ENCODE measurements at regions of chr16 and their contacts with region 1.

Region 1: DNA sequence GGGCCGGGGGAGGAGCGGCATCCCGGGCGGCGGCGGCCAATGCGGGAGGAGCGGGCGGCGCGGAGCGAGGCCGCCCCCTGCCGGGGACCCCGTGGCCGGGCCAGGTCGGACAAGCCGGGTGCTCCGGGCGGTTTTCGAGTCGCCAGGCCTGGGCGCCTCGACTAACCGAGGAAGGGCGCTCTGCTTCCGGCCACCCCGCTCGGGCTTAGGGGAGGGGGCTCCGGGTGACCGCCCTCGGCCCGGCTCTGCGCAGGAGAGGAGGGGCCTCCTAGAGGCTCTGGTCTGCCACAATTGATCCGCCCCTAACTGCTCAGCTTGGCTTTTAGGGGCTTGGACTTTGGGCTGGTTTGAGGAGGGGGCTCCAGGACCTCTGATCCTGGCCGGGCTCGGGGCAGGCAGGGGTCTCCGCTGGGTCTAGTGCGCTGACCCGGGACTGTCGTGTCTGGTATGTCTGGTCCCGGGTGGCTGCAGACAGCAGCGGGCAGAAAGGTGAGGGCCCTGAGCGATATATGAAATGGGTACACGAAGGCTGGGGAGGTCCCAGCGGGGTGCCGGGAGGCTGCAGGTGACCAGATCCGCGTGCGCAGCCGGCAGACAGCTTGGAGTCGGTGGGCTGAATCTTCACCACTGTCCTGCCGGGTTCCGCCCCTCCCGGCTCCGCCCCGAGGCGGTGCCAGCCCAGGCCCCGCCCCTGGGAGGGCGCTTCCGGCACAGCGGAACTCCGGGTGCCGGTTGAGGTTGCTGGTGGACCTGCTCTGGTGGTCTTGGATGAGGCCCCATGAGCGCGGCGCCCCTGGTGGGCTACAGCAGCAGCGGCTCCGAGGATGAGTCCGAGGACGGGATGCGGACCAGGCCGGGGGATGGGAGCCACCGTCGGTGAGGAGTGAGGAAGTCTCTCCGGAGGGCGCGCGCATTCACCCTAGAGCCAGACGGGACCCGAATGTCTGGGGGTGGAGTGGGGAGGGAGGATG is at the start of gene USB1:
- DNase-seq: peak; percentile 95
- total RNA-seq, gene USB1: 36.0 TPM

Region 2: DNA sequence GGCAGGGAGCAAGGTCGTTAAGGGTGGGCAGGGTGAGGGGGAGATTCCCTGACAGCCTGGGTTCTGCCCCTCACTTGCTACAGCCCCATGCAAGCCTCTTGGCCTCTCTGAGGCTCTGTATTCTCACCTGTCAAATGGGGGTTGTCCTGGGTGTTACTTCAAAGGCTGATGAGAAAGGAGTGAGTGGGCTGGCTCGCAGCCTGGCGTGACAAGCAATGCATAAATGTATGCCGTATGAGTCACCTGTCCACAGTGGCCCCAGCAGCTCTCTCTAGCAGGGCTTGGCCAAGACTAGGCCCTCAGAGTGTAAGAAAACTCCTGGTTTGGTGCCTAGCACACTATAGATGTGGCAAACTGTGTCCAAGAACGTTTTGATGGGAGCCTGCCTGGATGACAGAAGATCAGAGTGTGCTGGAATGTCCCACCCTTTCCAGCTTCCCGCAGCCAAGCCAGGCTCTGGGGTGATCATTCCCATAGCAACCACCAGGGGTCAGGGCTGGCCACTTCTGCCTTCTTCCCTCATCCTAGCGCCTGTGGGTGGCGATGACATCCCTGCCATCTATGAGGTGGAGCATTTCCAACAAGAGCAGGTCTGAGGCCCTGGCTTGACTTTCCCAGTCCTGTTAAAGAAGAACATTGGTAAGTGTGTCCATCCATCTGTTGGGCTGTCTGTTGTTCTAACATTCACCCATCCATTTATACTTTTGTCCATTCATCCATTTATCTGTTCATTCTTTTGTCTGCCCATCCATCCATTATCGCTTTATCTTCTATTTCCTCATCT is 409.7 kb before region 1 on chr16:
- intact Hi-C with region 1: loop called (anchors 5 kb)
- DNase-seq: peak; percentile 88

Region 3: GRCh38 chr16:57757326-57757786 is 243.6 kb before region 1 on chr16:
- intact Hi-C with region 1: loop called (anchors 5 kb)
- DNase-seq: peak; percentile 97

Region 4: GRCh38 chr16:57899771-57900661 is 101.0 kb before region 1 on chr16:
- intact Hi-C with region 1: loop called (anchors 2 kb)
- DNase-seq: peak; percentile 85